ENCODE measurements at regions of chr6 and their contacts with region 1.

Region 1: DNA sequence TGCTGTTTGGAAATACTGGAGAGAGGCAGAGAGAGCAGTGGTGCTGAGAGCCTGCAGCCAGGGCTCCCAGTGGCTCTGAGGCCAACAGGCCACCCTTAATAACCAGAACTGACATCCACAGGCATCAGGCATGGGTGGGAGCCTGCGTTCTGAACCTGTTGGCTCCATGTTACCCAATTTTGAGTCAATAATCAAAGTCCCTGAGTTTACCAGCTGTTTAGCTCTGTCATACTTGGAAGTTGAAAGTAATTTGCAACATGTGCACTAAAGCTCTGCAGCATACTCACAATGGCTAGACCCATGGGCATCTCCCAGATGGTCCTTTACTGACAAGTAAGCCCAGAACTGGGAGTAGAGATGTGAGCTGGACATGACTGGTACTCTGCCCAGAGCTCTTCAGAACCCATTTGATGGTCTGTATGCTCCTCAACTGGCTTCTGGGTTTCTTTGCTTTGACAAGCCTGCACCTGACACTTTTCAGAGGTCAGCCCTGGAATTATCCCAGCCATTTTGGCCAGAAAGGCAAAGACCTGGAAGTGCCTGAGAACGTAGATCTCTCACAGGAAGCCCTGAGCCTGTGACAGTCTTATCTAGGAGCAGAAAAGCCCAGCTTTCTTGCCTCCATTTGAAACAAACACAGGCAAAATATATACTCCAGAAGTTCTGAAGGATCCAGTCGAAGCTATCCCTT is 122.4 kb upstream of the CITED2 start:
- DNase-seq: peak in 2 of 4 experiments; percentile 46 to 70
- ATAC-seq: peak; percentile 75
- H3K4me3 ChIP-seq: peak overlapping the region; percentile 4; the same call in 1 of the 2 replicates
- H3K27ac ChIP-seq: peak overlapping the region; percentile 57
- H3K4me1 ChIP-seq: peaks cover 19 to 22% of the 10 kb centered on the region in 2 experiments
- H3K27me3 ChIP-seq: no peaks in the 10 kb centered on the region
- CTCF ChIP-seq: no peak
- EP300 ChIP-seq: no peak
- POLR2A ChIP-seq: no peak
- RAD21 ChIP-seq: no peak

Region 2: GRCh38 chr6:139313784-139314545 is 182.8 kb before region 1 on chr6:
- CTCF ChIA-PET with region 1: no interaction called
- POLR2A ChIA-PET with region 1: no interaction called
- in situ Hi-C with region 1: no loop called
- intact Hi-C with region 1: no loop called
- DNase-seq: no peak
- ATAC-seq: no peak
- H3K4me3 ChIP-seq: no peak overlapping the region
- H3K27ac ChIP-seq: no peak overlapping the region
- H3K4me1 ChIP-seq: no peaks in the 10 kb centered on the region
- H3K27me3 ChIP-seq: peaks cover 4% of the 10 kb centered on the region in 2 experiments; a peak in 2 of 5 replicates
- CTCF ChIP-seq: no peak
- EP300 ChIP-seq: no peak
- POLR2A ChIP-seq: no peak
- RAD21 ChIP-seq: no peak

Region 3: DNA sequence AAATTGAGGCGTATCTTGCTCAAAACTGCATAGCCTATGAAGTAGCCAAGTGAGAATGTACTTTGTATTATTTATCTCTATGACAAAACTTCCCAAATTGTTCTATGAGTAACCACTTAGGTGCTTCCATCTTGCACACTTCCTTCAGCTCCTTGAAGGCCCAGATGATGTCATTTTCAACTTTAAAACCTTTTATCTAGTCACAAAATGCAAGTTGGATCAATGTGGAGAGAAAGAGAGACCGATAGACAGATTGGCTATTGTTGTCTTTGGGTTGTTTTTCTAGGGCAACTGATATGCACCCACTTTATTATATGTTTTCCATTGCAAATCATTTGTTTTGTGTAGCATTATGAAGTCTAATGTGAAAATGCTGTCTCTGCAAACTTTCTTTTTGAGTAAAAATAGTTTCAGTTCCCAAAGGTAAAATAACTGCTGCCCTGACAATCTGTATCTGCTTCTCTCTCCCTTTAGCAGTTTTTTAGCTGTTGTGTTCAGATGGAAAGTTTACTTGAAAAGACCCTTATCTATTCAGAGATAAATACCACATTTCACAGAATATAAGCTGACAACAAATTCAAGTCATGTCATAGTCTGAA is 48.6 kb before region 1 on chr6:
- CTCF ChIA-PET with region 1: no interaction called
- POLR2A ChIA-PET with region 1: no interaction called
- in situ Hi-C with region 1: no loop called
- intact Hi-C with region 1: loop called (anchors 5 kb)
- DNase-seq: peak in 3 of 4 experiments; percentile 27 to 70 (median 35)
- ATAC-seq: peak; percentile 30
- H3K4me3 ChIP-seq: no peak overlapping the region
- H3K27ac ChIP-seq: peak overlapping the region; percentile 87
- H3K4me1 ChIP-seq: peaks cover 11 to 65% of the 10 kb centered on the region in 2 experiments
- H3K27me3 ChIP-seq: no peaks in the 10 kb centered on the region
- CTCF ChIP-seq: no peak
- EP300 ChIP-seq: peak; percentile 66
- POLR2A ChIP-seq: no peak
- RAD21 ChIP-seq: 0 out of 4 replicates have a peak, but pooled peaks of 1 of the 2 experiments have one; percentile 28

Region 4: DNA sequence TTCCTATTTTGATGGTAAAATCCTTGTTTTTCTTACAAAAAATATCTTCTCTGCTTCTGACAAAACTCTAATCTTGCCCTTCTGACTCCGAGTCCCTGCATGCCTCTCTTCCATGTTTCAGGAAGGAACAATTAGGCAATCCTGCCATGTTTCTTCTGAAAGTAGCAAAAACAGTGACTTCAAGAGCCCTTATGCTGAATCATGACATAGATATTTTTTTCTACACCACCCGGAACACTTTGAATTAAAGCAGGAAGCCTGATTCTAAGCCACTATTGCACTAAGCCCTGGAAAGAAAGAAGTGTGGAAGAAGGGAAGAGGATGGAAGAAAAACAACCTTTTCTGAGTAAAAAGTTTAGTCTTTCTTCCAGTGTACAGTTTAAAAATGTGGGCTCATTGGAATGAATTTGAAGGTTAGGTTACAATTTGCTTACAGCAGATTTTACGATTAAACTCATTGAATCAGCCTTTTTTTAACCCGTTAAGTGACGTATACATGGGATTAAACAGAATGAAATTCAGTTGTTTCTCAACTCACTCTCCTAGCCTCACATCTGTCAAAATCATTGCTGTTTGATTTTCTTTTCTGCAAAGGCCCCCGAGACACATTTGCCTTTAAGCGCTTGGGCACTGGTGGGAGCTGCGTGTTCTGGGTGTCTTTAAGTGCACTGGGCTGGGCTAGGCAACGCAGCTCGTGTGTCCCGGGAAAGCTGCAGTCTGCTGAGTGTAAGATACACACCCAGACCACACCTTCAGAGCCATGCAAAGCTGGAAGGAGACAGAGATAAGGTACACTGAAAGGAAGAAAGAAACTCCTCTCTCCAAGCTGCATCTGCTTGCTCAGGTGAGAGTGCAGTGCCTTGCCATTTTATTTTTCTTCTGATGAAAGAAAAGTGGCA is 37.0 kb after region 1 on chr6:
- CTCF ChIA-PET with region 1: no interaction called
- POLR2A ChIA-PET with region 1: no interaction called
- in situ Hi-C with region 1: no loop called
- intact Hi-C with region 1: loop called (anchors 1 kb)
- DNase-seq: peak; percentile 70 to 95 (median 78)
- ATAC-seq: peak; percentile 94
- H3K4me3 ChIP-seq: 0 out of 2 replicates have a peak overlapping the region, but pooled peaks have one; percentile 5
- H3K27ac ChIP-seq: peak overlapping the region; percentile 70
- H3K4me1 ChIP-seq: peaks cover 10 to 44% of the 10 kb centered on the region in 2 experiments; a peak in 4 of 5 replicates
- H3K27me3 ChIP-seq: no peaks in the 10 kb centered on the region
- CTCF ChIP-seq: no peak
- EP300 ChIP-seq: peak; percentile 75
- POLR2A ChIP-seq: no peak; the same call in 1 of the 2 replicates
- RAD21 ChIP-seq: peak in 1 of 2 experiments; percentile 20; a peak in 1 of 4 replicates

Region 5: GRCh38 chr6:139597771-139598755 is 101.3 kb after region 1 on chr6:
- CTCF ChIA-PET with region 1: no interaction called
- POLR2A ChIA-PET with region 1: no interaction called
- in situ Hi-C with region 1: no loop called
- intact Hi-C with region 1: no loop called
- DNase-seq: peak in 1 of 4 experiments; percentile 32
- ATAC-seq: peak; percentile 11; the same call in 2 of the 3 replicates
- H3K4me3 ChIP-seq: no peak overlapping the region
- H3K27ac ChIP-seq: no peak overlapping the region
- H3K4me1 ChIP-seq: peaks cover 4 to 25% of the 10 kb centered on the region in 2 experiments; a peak in 3 of 5 replicates
- H3K27me3 ChIP-seq: no peaks in the 10 kb centered on the region
- CTCF ChIP-seq: no peak
- EP300 ChIP-seq: no peak
- POLR2A ChIP-seq: no peak
- RAD21 ChIP-seq: no peak